Gastrocnemius medialis (tissue), 4 donors: ENCODE measurements at regions of chr14 and their contacts with region 1.

Region 1: DNA sequence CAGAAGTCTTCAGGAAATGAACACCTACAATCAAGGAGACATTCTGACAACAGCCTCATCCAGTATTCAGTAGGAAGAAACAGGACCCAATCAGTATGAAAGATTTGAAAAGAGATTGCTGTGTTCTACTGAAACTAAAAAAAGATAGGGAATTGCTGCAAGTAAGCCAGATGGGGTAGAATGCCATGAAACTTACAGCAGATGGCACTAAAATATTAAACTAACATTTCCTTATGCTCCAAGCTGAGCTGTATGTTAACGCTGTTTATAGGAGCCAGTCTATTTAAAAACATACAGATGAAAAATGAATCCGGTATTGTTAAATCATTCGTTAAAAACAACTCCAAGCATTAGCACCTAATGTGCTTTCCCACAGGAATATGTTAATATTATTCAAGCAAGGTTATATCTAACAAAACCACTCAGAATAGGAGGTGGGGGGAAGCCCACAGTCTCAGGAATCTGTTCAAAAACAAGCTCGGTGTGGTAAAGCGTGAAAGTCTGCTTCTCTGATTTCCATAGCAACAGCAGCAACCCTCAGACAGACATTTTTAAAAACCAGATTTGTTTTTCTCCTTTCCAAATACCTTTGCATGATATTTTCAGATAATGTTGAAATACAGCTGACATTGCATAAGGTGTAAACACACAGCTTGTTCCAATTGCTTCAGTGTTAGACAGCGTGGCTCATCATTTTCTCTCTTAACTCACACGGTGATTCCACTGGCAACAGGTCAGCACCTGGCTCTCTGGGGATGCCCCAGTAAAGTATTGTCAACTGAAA is 131.4 kb upstream of the CCDC175 start:
- DNase-seq: peak in 1 of 2 donors; percentile 21
- ATAC-seq: peak; percentile 79 to 81
- H3K4me3 ChIP-seq: no peak overlapping the region
- H3K27ac ChIP-seq: no peak overlapping the region
- H3K4me1 ChIP-seq: no peaks in the 10 kb centered on the region
- H3K27me3 ChIP-seq: no peaks in the 10 kb centered on the region
- CTCF ChIP-seq: no peak
- POLR2A ChIP-seq: no peak

Region 2: GRCh38 chr14:59897761-59898383 is 189.9 kb after region 1 on chr14:
- in situ Hi-C with region 1: no loop called
- intact Hi-C with region 1: loop called (anchors 5 kb)
- DNase-seq: no peak
- ATAC-seq: no peak
- H3K4me3 ChIP-seq: no peak overlapping the region
- H3K27ac ChIP-seq: no peak overlapping the region
- H3K4me1 ChIP-seq: no peaks in the 10 kb centered on the region
- H3K27me3 ChIP-seq: no peaks in the 10 kb centered on the region
- CTCF ChIP-seq: no peak
- POLR2A ChIP-seq: no peak